ENCODE measurements at regions of chr12 and their contacts with region 1.

Region 1: GRCh38 chr12:96399919-96400797 is at the start of gene CDK17:
- DNase-seq: peak; percentile 92
- ATAC-seq: peak; percentile 71
- H3K4me3 Mint-ChIP-seq: peak within 1 kb of the TSS; percentile 89
- H3K27ac Mint-ChIP-seq: peak within 1 kb of the TSS; percentile 98
- H3K4me1 Mint-ChIP-seq: peaks cover 42% of the 10 kb centered on the region
- H3K27me3 Mint-ChIP-seq: no peaks in the 10 kb centered on the region
- total RNA-seq, gene CDK17: 32.7 to 46.9 TPM

Region 2: GRCh38 chr12:96208801-96209549 is 191.2 kb before region 1 on chr12:
- CTCF ChIA-PET with region 1: interaction called, 12 read pairs
- DNase-seq: no peak
- ATAC-seq: no peak
- H3K4me3 Mint-ChIP-seq: no peak overlapping the region
- H3K27ac Mint-ChIP-seq: no peak overlapping the region
- H3K4me1 Mint-ChIP-seq: peaks cover 76% of the 10 kb centered on the region
- H3K27me3 Mint-ChIP-seq: no peaks in the 10 kb centered on the region

Region 3: DNA sequence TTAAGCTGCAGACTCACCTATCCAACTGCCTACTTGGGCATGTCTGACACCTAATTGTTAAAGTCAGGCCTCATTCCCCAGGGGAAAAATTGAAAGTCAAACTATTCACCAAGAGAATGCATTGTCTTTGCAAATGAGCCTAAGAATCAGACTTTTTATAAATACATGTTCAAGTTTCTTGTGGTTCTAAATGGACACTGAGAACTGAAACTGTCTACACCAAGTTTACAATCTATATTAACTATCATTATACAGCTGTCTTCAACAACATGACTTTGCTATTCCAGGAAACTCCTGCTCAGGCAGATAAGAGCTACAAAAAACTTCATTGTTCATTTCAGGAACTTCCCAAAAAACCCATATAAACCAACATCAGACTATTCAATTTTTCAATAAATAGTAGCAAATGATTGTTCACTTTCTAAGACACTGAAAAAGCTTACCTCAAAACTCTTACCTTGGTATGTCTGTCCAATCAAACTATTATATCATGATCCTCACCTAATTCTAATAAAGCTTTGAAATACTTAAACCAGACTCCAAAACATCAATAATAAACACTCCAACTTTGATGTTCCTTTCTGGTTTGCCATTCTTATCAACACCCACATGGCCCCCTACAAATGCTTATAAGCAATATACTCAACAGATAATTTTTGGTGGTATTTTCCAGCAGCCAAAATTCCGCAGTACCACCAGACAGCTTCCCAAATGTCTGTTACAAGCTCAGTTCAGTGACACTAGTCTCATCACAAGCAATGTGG is 24.1 kb before region 1 on chr12:
- CTCF ChIA-PET with region 1: interaction called, 22 read pairs
- DNase-seq: no peak
- ATAC-seq: no peak
- H3K4me3 Mint-ChIP-seq: no peak overlapping the region
- H3K27ac Mint-ChIP-seq: peak overlapping the region; percentile 19
- H3K4me1 Mint-ChIP-seq: peaks cover 66% of the 10 kb centered on the region
- H3K27me3 Mint-ChIP-seq: no peaks in the 10 kb centered on the region

Region 4: GRCh38 chr12:96445691-96446583 is 45.8 kb after region 1 on chr12:
- CTCF ChIA-PET with region 1: interaction called, 22 read pairs
- DNase-seq: peak; percentile 86
- ATAC-seq: peak; percentile 98
- H3K4me3 Mint-ChIP-seq: peak overlapping the region; percentile 37
- H3K27ac Mint-ChIP-seq: peak overlapping the region; percentile 95
- H3K4me1 Mint-ChIP-seq: peaks cover 49% of the 10 kb centered on the region
- H3K27me3 Mint-ChIP-seq: no peaks in the 10 kb centered on the region

Region 5: GRCh38 chr12:96501139-96501761 is 101.1 kb after region 1 on chr12:
- CTCF ChIA-PET with region 1: interaction called, 19 read pairs
- DNase-seq: peak; percentile 77
- ATAC-seq: peak; percentile 87
- H3K4me3 Mint-ChIP-seq: no peak overlapping the region
- H3K27ac Mint-ChIP-seq: peak overlapping the region; percentile 96
- H3K4me1 Mint-ChIP-seq: peaks cover 53% of the 10 kb centered on the region
- H3K27me3 Mint-ChIP-seq: no peaks in the 10 kb centered on the region

Measured in activated CD8-positive, alpha-beta memory T cell treated with anti-CD3 and anti-CD28 coated beads, Interleukin-2, amount 10 ng/mL, durations not matched to agents 7 days and 5 days (primary cell).